Panc1 (cell line): ENCODE measurements at regions of chr5 and their contacts with region 1.

Region 1: GRCh38 chr5:94326579-94326978 is 291.8 kb downstream of the KIAA0825 start:
- DNase-seq: peak; percentile 25
- ATAC-seq: no peak
- H3K4me3 ChIP-seq: no peak overlapping the region
- H3K27ac ChIP-seq: no peak overlapping the region
- H3K4me1 ChIP-seq: no peaks in the 10 kb centered on the region
- H3K27me3 ChIP-seq: no peaks in the 10 kb centered on the region
- CTCF ChIP-seq: peak; percentile 40

Region 2: DNA sequence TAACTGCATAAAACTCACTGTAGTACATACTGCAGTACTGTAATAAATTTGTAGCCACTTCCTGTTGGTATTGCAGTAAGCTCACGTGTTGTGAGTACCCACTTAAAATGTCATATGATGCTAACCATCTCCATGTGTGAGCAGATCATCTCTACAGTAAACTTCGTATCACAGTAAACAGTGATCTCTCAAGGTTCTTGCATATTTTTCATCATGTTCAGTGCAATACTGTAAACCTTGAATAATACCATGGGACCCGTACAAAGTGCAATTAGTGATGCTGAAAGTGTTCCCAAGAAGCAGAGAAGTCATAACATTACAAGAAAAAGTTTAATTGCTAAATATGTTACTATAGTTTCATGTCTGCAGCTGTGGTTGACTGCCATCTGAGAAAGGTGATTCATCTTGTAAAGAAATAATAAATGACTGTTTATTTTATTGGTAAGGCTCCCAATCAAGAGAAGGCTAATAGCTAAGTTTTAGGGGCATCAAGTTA is 331.4 kb before region 1 on chr5:
- CTCF ChIA-PET with region 1: no interaction called
- POLR2A ChIA-PET with region 1: no interaction called
- in situ Hi-C with region 1: no loop called
- intact Hi-C with region 1: no loop called
- DNase-seq: no peak
- ATAC-seq: no peak
- H3K4me3 ChIP-seq: no peak overlapping the region
- H3K27ac ChIP-seq: no peak overlapping the region
- H3K4me1 ChIP-seq: no peaks in the 10 kb centered on the region
- H3K27me3 ChIP-seq: no peaks in the 10 kb centered on the region
- CTCF ChIP-seq: no peak

Region 3: DNA sequence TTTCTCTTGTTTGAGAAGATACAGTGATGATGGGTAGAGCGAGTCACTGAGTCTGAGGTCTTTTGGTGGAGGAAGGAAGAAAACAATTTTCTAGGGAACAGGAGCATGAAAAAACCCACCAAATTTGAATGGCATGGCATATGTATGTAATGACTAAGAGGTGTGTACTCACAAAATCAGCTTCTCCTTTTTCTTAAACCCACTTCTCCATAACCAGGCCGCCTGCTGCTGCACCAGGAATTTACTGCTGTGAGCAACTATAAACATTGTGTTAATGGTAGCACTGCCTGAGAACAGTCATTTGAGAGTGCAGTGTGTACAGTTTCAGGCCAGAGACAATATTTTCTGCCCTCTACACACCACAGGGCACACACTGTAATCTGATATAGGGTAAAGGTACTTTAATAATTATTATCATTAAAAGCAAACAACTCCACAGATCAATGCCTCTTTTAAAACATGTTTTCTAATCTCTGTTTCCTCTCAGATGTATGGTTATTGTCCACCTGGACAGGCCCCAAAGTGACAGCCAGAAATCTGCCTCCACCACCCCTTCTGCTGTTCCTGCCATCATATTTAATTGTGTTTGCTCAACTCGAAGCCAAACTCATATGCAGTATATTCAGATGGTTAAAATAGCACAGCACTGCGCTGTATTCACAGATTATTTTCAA is 50.2 kb after region 1 on chr5:
- CTCF ChIA-PET with region 1: no interaction called
- POLR2A ChIA-PET with region 1: interaction called, 10 read pairs
- in situ Hi-C with region 1: no loop called
- intact Hi-C with region 1: no loop called
- DNase-seq: no peak
- ATAC-seq: no peak
- H3K4me3 ChIP-seq: no peak overlapping the region
- H3K27ac ChIP-seq: no peak overlapping the region
- H3K4me1 ChIP-seq: no peaks in the 10 kb centered on the region
- H3K27me3 ChIP-seq: no peaks in the 10 kb centered on the region
- CTCF ChIP-seq: no peak

Region 4: DNA sequence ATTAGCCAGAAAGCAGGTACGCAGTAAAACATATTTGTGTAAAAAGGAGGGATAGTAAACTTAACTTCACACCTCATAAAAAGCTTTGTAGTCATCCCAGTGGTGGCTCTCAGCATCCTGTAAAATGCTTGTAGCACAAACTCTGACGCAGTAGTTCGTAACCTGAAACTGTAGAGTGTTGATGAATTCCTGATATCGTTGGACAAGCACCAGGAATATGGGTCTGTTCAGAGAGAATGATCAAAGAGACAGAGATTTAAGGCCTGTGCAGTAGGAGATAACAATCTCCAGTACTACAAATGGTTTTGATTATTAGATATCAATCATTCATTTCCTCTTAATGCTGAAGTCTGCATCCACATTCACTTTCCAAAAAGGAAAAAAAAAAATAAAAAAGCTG is 143.3 kb after region 1 on chr5:
- CTCF ChIA-PET with region 1: no interaction called
- POLR2A ChIA-PET with region 1: no interaction called
- in situ Hi-C with region 1: no loop called
- intact Hi-C with region 1: no loop called
- DNase-seq: no peak
- ATAC-seq: no peak
- H3K4me3 ChIP-seq: no peak overlapping the region
- H3K27ac ChIP-seq: no peak overlapping the region
- H3K4me1 ChIP-seq: no peaks in the 10 kb centered on the region
- H3K27me3 ChIP-seq: no peaks in the 10 kb centered on the region
- CTCF ChIP-seq: no peak

Region 5: DNA sequence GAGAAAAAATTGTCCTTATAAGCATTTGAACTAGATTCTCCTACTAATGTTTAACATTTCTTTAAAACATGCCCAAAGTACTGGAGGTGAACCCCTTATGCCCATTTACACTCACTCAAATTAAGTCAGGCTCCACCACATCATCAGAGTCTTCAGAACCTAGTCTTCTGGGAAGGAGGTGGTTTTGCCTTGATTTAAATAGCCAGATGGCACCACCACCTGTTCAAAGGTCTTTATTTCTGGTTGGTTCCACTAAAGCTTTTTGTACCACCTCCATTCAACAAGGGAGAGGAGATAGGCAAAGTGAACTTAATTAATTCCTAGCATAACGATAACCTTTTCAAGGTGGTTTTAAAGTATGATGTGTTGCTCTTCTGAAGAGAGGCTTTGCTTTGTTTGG is 481.4 kb after region 1 on chr5:
- CTCF ChIA-PET with region 1: no interaction called
- POLR2A ChIA-PET with region 1: no interaction called
- in situ Hi-C with region 1: no loop called
- intact Hi-C with region 1: no loop called
- DNase-seq: no peak
- ATAC-seq: no peak
- H3K4me3 ChIP-seq: no peak overlapping the region
- H3K27ac ChIP-seq: no peak overlapping the region
- H3K4me1 ChIP-seq: no peaks in the 10 kb centered on the region
- H3K27me3 ChIP-seq: no peaks in the 10 kb centered on the region
- CTCF ChIP-seq: no peak